Astrocyte of the cerebellum (primary cell): ENCODE measurements at regions of chr5 and their contacts with region 1.

Region 1: DNA sequence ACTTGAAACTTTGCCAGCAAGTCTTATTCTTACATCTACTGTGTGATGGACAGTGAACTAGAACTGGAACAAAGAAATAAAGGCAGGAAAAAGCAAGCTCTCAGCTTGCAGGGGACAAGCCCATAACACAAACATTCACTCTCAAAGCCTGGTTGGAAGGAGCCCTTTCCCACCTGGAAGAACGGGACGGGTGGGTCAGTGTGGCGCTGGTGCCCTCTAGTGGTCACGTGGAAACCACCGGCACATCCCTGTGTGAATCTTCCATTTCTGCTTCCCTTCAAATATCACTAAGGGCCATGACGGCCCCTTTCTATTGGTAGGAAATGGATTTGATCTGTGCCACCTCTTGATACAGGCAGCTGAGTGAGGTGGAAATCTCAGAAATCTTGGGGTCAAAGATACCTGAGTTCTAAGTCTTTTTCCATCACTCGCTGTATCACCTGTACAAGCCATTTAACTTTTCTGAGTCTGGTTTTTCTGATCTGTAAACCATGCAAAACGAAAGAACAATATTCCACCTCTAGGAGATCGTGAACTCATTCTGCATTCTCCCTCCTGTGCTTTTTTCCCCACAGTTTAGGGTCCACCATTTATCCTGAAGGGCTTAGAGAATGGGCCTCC is 211.6 kb downstream of the MSX2 start:
- DNase-seq: peak; percentile 40
- H3K4me3 ChIP-seq: no peak overlapping the region
- CTCF ChIP-seq: peak; percentile 97

Region 2: DNA sequence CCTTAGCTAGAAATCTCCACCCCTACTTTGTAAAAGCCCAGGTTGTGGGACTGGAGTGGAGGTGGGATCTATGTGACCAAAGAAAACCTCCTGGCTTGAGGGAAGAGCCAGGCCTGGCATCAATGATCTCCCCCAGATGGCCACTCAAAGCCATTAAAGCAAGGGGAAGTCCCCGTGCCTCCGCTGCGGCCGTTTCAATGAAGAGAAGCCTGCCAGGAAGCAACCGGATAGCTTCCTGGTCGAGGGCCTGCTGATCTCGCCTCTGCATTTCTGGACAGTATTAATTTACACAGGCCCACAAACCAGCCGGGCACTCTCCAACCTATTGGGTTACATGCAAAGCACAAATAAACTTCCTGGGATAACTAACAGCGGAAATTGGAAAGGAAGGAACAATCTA is 372.1 kb before region 1 on chr5:
- in situ Hi-C with region 1: no loop called
- DNase-seq: no peak
- H3K4me3 ChIP-seq: no peak overlapping the region
- CTCF ChIP-seq: no peak

Region 3: GRCh38 chr5:175025077-175025476 is 89.1 kb after region 1 on chr5:
- in situ Hi-C with region 1: no loop called
- DNase-seq: peak; percentile 3
- H3K4me3 ChIP-seq: no peak overlapping the region
- CTCF ChIP-seq: no peak

Region 4: GRCh38 chr5:175444060-175444904 is 508.3 kb after region 1 on chr5 and contains the start of gene DRD1:
- in situ Hi-C with region 1: loop called (anchors 25 kb)
- DNase-seq: no peak
- H3K4me3 ChIP-seq: peak within 1 kb of the TSS; percentile 40
- CTCF ChIP-seq: peak; percentile 71